ENCODE measurements at regions of chr5 and their contacts with region 1.

Region 1: DNA sequence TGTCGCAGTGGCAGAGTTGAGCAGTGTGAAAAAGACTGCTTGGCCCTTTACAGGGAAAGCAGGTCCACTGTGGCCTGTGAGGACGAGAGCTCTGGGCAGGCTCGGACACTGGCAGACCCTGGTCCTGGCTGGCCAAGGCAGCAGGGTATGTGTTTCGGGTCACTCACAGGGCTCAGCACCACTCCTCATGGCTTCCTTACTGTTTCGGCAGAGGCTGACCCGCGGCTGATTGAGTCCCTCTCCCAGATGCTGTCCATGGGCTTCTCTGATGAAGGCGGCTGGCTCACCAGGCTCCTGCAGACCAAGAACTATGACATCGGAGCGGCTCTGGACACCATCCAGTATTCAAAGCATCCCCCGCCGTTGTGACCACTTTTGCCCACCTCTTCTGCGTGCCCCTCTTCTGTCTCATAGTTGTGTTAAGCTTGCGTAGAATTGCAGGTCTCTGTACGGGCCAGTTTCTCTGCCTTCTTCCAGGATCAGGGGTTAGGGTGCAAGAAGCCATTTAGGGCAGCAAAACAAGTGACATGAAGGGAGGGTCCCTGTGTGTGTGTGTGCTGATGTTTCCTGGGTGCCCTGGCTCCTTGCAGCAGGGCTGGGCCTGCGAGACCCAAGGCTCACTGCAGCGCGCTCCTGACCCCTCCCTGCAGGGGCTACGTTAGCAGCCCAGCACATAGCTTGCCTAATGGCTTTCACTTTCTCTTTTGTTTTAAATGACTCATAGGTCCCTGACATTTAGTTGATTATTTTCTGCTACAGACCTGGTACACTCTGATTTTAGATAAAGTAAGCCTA is 15.7 kb downstream of the SQSTM1 start:
- DNase-seq: no peak
- H3K4me3 Mint-ChIP-seq: no peak overlapping the region
- H3K27ac Mint-ChIP-seq: peak overlapping the region; percentile 63
- H3K4me1 Mint-ChIP-seq: no peaks in the 10 kb centered on the region
- H3K27me3 Mint-ChIP-seq: no peaks in the 10 kb centered on the region
- CTCF ChIP-seq: no peak

Region 2: DNA sequence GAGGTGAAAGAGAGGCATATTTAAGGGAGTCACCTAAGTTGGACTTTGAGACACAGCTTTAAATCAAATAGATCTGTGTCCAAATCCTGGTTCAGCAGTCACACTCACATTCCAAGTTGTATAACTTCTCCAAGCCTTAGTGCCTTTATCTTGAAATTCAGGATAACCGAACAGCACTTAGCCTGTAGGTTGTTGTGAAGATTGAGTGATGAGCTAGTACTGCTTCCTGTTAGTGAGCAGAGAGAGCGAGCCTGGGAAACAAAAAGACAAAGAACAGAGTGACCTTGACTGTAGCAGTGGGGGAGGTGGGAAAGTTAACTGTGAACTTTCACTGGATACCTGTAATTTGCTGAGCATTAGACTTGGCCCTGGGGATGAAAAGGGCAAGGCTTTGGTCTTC is 81.4 kb before region 1 on chr5:
- CTCF ChIA-PET with region 1: no interaction called
- POLR2A ChIA-PET with region 1: no interaction called
- intact Hi-C with region 1: no loop called
- DNase-seq: no peak
- H3K4me3 Mint-ChIP-seq: no peak overlapping the region
- H3K27ac Mint-ChIP-seq: peak overlapping the region; percentile 28
- H3K4me1 Mint-ChIP-seq: peaks cover 31% of the 10 kb centered on the region
- H3K27me3 Mint-ChIP-seq: no peaks in the 10 kb centered on the region
- CTCF ChIP-seq: no peak

Region 3: DNA sequence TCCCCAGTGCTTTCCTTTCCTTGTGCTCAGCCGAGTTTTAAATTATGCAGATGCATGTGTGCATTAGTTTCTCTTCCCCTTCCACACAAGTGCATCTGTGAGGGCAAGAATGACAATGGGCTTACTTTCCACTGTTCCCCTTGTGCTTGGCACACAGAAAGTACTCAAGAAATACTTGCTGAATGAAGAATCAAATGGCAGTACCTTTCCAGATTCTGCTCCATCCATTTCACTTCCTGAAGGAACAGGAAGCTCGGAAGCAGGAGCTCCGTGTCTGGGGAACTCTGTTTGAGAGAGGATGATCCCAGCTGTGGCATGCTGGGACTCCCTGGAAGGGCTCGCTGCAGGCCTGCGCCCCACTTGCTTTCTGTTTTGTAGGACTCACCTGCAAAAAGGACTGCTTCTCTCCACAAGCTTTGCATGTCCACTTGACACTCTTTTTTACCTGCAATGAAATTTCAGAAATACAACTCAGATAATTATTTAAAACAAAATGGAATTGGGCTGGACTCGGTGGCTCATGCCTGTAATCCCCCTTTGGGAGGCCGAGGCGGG is 16.6 kb after region 1 on chr5:
- CTCF ChIA-PET with region 1: no interaction called
- POLR2A ChIA-PET with region 1: interaction called, 12 read pairs
- intact Hi-C with region 1: no loop called
- DNase-seq: no peak
- H3K4me3 Mint-ChIP-seq: no peak overlapping the region
- H3K27ac Mint-ChIP-seq: no peak overlapping the region
- H3K4me1 Mint-ChIP-seq: no peaks in the 10 kb centered on the region
- H3K27me3 Mint-ChIP-seq: no peaks in the 10 kb centered on the region
- CTCF ChIP-seq: no peak